ENCODE measurements at regions of chr22 and their contacts with region 1.

Region 1: GRCh38 chr22:36387752-36388518 is at the start of gene MYH9:
- DNase-seq: peak; percentile 100
- H3K4me3 Mint-ChIP-seq: peak within 1 kb of the TSS; percentile 100
- H3K27ac Mint-ChIP-seq: peak within 1 kb of the TSS; percentile 99
- H3K4me1 Mint-ChIP-seq: peaks cover 44% of the 10 kb centered on the region
- H3K27me3 Mint-ChIP-seq: no peaks in the 10 kb centered on the region
- total RNA-seq, gene MYH9: 618 and 639 TPM in 2 replicates

Region 2: DNA sequence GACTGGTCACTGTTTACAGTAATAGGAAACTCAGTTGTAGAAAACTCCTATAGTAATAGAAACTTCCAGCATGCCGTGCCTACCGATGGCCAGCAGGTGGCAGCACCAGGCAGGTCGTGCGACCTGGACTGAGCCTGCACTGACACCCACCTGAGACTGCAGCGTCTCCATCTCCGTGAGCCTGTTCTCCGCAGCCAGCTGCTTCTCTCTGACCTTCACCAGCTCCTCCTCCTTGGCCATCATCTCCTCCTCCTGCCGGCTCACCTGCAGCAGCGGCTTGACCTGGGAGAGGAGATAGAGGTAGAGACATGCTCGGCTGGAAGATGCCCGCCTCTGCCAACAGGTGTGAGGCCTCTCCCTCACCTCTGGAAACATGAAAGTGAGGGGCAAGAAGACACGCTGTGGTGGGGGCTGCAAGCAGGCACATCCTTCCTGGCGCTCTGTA is 86.5 kb before region 1 on chr22:
- intact Hi-C with region 1: loop called (anchors 1 kb)
- DNase-seq: peak; percentile 65
- H3K4me3 Mint-ChIP-seq: no peak overlapping the region
- H3K27ac Mint-ChIP-seq: no peak overlapping the region
- H3K4me1 Mint-ChIP-seq: peaks cover 6% of the 10 kb centered on the region
- H3K27me3 Mint-ChIP-seq: no peaks in the 10 kb centered on the region

Region 3: DNA sequence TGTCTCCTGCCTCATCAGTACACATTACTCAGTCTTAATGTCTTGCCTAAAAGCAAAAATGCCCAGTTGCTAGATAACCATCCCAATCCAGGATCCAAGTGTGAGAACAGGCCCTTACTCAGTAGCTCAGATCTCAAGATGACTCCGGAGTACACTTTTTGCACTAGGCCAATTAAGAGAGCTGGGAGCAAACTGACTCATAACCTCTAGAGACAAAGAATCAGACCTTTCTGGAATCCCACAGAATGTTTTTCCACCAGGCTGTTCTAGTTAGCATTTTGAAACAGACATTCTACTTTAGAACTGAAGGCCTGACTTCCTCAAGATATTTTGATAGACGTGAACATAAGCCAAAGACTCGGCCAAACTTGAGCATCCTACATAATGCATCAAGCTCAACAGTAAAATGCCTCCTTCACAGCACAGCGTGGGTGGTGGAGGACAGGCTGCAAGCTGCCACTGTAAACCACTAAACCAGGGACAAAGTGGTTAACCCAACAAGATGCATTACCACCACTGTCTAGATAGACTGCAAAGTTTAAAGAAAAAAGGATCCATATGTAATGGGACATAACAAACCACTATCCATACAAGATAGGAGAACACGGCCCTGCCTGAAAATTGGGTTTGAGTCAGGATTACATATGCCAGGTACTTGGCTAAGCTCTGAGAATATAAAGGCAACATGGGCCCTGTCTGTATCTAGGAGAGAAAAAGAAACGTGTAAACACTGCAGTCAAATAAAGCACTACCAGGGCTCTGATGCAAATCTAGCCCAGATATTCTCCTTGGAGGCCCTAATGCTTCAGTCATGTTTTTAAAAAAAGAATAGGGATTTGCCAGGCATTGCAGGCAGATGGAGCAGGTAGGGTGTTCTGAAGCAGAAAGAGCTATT is 48.5 kb before region 1 on chr22:
- intact Hi-C with region 1: loop called (anchors 1 kb)
- DNase-seq: peak; percentile 32
- H3K4me3 Mint-ChIP-seq: peak overlapping the region; percentile 58
- H3K27ac Mint-ChIP-seq: peak overlapping the region; percentile 92
- H3K4me1 Mint-ChIP-seq: peaks cover 90% of the 10 kb centered on the region
- H3K27me3 Mint-ChIP-seq: no peaks in the 10 kb centered on the region

Region 4: GRCh38 chr22:36365020-36365411 is 22.9 kb before region 1 on chr22:
- intact Hi-C with region 1: loop called (anchors 1 kb)
- DNase-seq: peak; percentile 84
- H3K4me3 Mint-ChIP-seq: peak overlapping the region; percentile 71
- H3K27ac Mint-ChIP-seq: peak overlapping the region; percentile 95
- H3K4me1 Mint-ChIP-seq: peaks cover 93% of the 10 kb centered on the region
- H3K27me3 Mint-ChIP-seq: no peaks in the 10 kb centered on the region

Region 5: DNA sequence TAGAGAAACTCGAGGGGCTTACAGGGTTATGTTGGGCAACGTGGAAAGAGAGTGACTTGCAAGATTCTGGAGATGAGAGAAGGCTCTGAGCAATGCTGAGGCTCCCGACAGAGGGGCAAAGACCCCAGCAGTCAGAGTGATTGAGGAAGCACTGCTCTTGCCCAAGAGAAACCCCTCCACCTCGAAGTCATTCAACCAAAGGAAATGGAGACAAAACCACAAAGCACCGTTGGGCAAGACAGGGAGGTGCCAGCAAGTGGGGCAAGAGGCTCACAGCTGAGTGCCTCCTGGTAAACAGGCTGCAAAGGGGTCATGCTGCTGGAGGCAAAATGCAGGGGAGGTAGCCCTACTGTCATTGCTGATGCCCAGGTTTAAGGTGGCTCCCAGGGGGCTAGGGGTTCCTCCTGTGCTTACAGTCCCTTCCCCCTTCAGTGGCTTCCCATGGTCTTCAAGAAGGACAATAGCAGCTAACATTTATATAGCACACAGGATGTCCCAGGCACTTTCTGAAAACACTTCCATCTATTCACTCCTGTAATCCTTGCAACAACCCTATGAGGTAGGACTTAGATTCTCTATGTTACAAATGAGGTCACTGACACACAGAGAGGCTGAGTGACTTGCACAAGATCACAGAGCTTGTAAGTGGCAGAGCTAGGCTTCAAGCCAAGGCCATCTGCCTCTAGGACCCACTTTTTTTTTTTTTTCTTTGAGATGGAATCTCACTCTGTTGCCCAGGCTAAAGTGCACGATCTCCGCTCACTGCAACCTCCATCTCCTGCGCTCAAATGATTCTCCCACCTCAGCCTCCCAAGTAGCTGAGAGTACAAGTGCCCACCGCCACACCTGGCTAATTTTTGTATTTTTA is 18.0 kb after region 1 on chr22:
- intact Hi-C with region 1: loop called (anchors 2 kb)
- DNase-seq: peak; percentile 33
- H3K4me3 Mint-ChIP-seq: peak overlapping the region; percentile 46
- H3K27ac Mint-ChIP-seq: peak overlapping the region; percentile 96
- H3K4me1 Mint-ChIP-seq: peaks cover 34% of the 10 kb centered on the region
- H3K27me3 Mint-ChIP-seq: no peaks in the 10 kb centered on the region

Region 6: DNA sequence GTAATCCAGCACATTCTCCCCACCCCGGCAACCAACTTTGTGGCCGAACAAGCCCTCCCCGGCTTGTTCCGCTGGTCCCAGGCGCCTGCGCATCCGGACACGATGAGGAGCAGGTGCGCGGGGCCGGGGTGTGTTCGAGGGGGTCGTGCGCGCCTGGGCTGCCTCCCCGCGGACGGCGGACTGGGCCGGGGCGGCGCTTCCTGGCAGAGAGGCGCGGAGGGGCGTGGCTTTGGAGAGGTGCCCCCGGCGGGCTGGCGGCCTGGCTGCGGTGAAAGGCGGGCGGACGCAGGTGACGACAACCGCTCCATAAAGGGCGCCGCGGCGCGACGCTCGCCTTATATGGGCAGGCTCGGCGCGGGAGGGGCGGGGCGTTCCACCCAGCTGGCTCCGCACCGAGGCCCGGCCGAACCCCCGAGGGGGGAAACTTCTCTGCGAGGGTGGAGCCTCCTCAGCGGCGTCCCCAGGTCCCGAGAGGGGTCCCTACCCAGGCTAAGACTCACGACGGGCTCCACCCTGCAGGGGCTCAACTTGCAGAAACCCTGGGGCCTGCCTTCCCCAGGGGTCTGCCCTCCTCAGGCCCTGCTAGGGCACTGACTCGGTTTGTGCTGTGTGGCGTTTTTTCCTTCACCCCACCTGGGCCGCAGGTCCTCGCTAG is 67.1 kb after region 1 on chr22:
- intact Hi-C with region 1: loop called (anchors 1 kb)
- DNase-seq: peak; percentile 94
- H3K4me3 Mint-ChIP-seq: peak overlapping the region; percentile 72
- H3K27ac Mint-ChIP-seq: peak overlapping the region; percentile 34
- H3K4me1 Mint-ChIP-seq: peaks cover 39% of the 10 kb centered on the region
- H3K27me3 Mint-ChIP-seq: no peaks in the 10 kb centered on the region

Region 7: GRCh38 chr22:36528795-36529751 is 141.1 kb after region 1 on chr22 and contains the start of gene EIF3D:
- intact Hi-C with region 1: loop called (anchors 5 kb)
- DNase-seq: peak; percentile 99
- H3K4me3 Mint-ChIP-seq: peak within 1 kb of the TSS; percentile 96
- H3K27ac Mint-ChIP-seq: peak within 1 kb of the TSS; percentile 99
- H3K4me1 Mint-ChIP-seq: peaks cover 24% of the 10 kb centered on the region
- H3K27me3 Mint-ChIP-seq: peaks cover 2% of the 10 kb centered on the region
- total RNA-seq, gene EIF3D: 322 and 323 TPM in 2 replicates